Left cardiac atrium (tissue), 4 donors: ENCODE measurements at regions of chr9 and their contacts with region 1.

Region 1: GRCh38 chr9:92133949-92134604 is 18.9 kb upstream of the SPTLC1 start:
- DNase-seq: peak; percentile 85
- ATAC-seq: peak; percentile 81 to 87

Region 2: GRCh38 chr9:92064711-92065110 is 69.4 kb before region 1 on chr9:
- intact Hi-C with region 1: no loop called
- DNase-seq: no peak
- ATAC-seq: no peak

Region 3: DNA sequence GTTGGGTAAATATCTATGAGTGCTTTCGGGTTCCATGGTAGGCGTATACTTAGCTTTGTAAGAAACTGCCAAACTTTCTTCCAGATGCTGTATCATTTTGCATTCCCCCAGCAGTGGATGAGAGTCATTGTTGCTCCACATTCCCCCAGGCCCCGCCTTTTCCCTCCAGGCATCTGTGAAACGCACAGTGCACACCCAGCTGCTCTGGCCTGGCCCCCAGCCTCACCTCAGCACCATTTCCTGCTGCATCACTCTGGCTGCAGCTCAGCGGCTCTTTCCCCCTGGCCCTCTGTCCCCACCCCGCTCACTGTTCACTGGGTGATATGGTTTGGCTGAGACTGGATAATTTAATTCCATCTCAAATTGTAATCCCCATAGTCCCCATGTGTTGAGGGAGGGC is 57.7 kb after region 1 on chr9:
- intact Hi-C with region 1: no loop called
- DNase-seq: no peak
- ATAC-seq: no peak

Region 4: DNA sequence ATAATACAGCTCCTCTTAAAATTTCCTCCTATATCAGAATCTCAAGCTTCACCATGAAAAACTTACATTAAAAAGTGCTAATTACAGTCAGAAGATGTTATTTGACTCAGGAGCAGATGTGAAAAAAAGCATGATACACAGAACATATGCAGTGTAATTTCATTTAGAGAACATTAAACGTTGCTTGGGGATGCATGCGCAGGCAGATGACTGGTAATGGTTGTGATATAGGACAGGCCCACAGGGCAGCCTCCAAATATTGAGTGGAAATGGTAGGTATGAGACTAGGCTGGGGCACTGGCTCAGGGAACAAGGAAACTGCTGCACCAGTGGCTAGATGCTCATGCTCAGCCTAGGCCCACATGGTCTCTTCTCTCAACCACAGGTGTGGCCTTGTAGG is 89.7 kb after region 1 on chr9:
- intact Hi-C with region 1: loop called in 1 of 2 experiments (anchors 10 kb)
- DNase-seq: no peak
- ATAC-seq: no peak

Region 5: DNA sequence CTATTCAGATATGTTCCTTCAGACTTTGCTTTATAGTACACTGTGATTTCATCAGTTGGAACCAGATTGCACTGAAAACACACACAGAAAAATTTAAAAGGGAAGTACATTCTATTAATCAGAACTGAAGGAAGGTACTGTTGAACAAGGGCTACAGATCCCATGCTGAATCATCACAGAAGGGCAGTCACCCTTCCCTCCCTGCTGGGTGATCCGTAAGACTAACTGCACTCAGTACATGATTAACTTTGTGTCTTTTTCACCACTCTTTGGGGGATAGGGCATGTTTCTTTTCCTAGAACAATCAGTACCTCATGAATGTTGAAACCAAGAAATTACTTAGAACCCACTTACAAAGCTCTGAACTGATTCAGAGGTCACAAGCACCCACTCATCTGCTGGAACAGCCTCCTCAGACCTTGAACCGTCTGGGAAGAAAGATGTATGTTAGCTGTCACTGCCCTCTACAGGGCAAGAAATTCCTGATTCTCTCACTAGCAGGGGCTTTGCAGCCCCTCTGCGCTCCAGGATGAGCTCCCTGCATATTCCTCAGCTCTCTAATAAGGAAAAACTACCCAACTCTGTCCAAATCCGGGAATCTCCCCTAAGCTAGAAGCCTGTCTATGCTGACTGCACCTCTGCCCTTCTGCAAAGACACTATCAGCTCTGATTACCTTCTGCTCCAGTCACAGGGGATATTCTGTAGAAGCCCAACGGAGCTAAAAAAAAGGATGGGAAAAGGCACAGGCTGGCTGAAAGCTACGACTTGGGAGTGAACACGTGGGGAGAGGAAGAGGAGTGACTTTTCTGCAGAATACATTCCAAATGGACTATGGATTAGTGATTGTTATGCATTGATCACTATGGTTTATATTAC is 108.4 kb after region 1 on chr9:
- intact Hi-C with region 1: loop called in 1 of 2 experiments (anchors 10 kb)
- DNase-seq: no peak
- ATAC-seq: peak in 1 of 2 donors; percentile 49

Region 6: DNA sequence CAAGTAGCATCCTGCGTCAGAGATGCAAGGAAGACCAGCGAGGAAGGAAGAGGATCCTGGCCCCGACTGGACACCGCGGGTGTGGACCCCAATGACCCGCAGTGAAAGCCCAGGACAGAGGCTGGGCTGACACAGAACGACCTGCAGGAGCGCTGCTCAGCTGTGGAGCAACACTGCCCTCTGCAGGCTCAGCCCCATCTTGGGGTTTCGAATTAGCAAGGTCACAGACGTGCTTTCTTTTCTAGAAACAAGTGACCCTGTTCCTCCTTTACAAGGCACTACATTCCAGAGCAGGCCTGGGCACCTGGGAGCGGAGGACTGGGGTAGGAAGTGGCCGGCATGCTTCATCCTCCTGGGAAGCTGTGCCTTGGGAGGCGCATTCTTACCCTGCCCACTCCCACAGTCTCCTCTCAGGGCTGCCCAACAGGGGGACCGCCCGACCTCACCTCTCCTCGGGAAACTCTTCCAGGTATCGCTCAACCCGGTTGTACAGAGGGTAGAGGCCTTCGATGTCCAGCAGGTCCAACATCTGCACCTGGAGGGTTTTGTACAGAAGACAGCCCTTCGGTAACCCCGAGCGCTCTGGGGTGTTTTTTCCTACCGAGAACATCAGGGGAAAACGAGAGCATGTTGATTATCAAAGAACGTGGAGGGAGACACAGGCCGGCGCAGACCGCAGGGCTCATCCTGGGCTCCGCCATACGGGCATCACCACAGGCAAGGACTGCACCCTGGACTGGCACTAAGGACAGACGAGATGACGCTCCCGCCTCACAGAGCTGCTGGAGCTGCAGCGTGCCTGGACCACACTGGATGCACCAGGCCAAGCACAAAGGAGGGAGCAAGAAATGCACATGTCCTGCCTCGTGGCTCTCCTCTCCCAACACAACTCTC is 500.9 kb after region 1 on chr9:
- intact Hi-C with region 1: loop called in 1 of 2 experiments (anchors 5 kb)
- DNase-seq: peak; percentile 78
- ATAC-seq: peak; percentile 88 to 94